ENCODE measurements at regions of chr1 and their contacts with region 1.

Region 1: DNA sequence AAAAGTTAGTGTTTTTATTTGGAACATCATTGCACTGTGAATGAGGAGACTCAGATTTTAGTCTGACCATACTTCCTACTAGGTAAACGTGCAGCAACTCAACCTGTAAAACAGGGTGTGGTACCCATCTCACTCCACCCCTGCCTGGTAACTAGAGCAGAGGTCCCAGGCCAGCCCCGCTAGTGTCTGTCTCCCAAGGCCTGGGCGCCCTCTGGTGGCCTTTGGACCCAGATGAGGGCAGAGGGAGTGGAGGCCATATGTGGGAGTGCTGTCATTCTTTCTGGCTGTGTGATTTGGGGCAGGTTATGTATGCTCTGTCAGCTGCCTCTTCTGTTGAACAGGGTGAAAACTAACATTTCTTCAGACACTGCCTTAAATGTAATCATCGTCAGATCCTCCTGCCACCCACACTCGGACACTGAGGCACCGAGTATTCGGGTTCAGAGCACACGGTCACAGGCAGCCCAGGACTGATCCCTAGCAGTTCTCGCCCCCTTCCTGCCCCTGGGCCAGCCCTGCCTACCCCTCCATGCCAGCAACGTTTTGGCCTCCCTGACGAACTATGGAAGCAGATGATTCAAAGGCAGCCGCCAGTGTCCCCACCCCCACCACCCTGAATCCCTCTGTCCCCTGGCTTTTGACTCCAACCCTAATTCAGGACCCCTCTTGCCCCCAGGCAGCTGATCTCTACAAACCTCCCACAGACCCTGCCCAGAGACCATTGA is 76.0 kb downstream of the CD247 start:
- DNase-seq: peak; percentile 93
- H3K4me3 Mint-ChIP-seq: no peak overlapping the region
- H3K27ac Mint-ChIP-seq: peak overlapping the region; percentile 79
- H3K4me1 Mint-ChIP-seq: peaks cover 74% of the 10 kb centered on the region
- H3K27me3 Mint-ChIP-seq: no peaks in the 10 kb centered on the region

Region 2: DNA sequence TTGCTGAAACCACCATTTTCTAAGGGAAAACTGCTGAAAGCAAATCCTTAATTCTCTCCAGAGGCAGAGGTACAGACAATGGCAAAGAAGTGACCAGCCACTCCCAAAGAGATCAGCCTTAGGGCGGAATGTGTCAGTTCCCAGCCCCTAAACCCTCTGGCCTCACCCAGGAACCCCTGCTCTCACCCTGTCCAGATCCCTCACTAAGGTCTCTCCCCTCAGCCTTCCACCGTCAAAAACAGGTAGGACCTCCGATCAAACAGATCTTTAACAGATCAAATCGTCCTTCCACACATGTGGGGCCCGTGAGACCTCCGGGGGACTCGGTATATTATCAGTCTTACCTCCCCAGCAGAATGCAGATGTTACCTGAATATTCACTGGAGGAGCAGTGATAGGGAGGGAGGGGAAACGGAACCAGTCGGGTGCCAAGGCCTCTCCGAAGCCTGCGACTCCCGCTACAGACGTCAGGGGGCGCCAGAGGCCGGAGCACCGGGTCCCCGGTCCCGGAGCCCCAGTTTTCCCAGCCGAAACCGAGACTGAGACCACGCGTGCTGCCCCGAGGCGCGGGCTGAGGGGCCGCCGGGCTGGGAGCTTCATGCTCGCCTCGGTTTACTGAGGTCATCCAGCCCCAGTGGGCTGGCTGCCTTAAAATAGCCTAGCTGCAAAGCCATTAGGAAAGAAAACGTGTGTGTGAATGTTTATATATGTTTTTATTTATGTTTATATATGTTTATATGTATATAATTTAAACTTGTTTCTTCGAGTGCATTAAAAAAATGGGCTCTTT is 375.8 kb before region 1 on chr1:
- CTCF ChIA-PET with region 1: interaction called, 3 read pairs
- intact Hi-C with region 1: loop called (anchors 1 kb)
- DNase-seq: peak; percentile 82
- H3K4me3 Mint-ChIP-seq: no peak overlapping the region
- H3K27ac Mint-ChIP-seq: no peak overlapping the region
- H3K4me1 Mint-ChIP-seq: peaks cover 2% of the 10 kb centered on the region
- H3K27me3 Mint-ChIP-seq: no peaks in the 10 kb centered on the region

Region 3: DNA sequence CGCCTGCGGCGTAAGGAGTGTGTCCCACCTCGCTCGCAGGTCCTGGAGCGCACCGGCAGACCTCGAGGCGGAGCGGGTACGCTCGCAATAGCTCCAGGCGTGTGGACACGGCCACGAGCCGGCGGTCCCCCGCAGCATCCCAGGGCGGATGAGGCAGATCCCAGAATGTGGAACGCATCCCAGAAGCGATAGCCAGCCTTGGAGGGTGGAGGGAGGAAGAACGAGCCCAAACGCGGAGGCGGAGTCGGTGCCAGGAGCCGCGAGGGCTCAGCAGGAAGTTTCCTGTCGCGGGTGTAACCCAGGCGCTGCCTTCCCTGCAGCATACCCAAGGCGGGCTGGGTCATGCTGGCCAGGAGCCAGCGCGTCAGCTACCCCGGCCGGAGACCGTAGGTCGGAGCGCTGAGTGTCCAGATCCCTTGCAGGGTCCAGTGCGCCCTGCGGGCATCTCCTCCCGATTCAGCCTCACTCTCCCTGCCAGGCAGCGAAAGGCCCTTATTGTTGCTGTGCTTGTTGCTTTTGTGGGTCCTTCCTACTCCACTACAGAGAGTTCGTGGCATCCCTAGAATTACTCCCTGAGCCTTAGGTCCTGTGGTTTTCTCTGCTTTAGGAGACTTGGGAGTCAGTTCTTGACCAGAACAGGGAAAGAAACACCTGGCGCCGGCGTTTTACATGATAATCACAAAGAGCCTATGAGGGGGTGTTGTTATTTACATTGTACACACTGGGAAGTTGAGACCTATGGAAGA is 320.7 kb before region 1 on chr1:
- CTCF ChIA-PET with region 1: interaction called, 3 read pairs
- intact Hi-C with region 1: loop called (anchors 1 kb)
- DNase-seq: peak; percentile 58
- H3K4me3 Mint-ChIP-seq: peak overlapping the region; percentile 81
- H3K27ac Mint-ChIP-seq: no peak overlapping the region
- H3K4me1 Mint-ChIP-seq: peaks cover 3% of the 10 kb centered on the region
- H3K27me3 Mint-ChIP-seq: peaks cover 2% of the 10 kb centered on the region

Region 4: DNA sequence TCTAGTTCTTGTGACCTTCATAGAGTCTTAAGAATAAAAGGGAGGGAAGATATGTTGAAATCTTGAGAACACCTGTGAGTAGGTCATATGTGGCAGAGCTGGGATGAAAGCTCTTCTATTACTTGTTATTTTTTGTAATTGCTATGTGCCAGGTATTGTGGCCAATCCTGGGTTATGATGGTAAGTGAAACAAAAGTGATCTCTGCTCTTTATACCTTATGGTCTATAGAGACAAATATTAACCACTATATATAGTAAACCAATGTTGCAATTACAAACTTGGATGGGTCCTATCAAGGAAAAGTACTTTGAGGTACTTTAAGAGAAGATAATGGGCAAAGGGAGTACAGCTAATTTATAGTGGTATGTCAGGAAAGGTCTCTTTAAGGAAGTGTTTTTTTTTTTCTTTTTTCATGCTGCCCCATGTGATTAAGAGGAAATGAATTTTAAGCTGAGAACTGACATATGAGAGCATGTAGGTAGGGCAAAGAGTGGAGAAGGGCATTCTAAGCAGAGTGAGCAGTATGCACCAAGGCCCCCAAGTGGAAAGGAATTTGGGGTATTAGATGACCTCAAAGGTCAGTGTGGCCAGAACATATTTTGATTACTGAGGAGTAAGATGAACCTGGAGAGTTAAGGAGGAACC is 178.3 kb before region 1 on chr1:
- CTCF ChIA-PET with region 1: interaction called, 26 read pairs
- intact Hi-C with region 1: loop called (anchors 1 kb)
- DNase-seq: no peak
- H3K4me3 Mint-ChIP-seq: no peak overlapping the region
- H3K27ac Mint-ChIP-seq: no peak overlapping the region
- H3K4me1 Mint-ChIP-seq: peaks cover 20% of the 10 kb centered on the region
- H3K27me3 Mint-ChIP-seq: no peaks in the 10 kb centered on the region

Region 5: GRCh38 chr1:167401260-167401873 is 40.9 kb before region 1 on chr1:
- CTCF ChIA-PET with region 1: interaction called, 8 read pairs
- intact Hi-C with region 1: loop called (anchors 1 kb)
- DNase-seq: peak; percentile 70
- H3K4me3 Mint-ChIP-seq: no peak overlapping the region
- H3K27ac Mint-ChIP-seq: no peak overlapping the region
- H3K4me1 Mint-ChIP-seq: no peaks in the 10 kb centered on the region
- H3K27me3 Mint-ChIP-seq: no peaks in the 10 kb centered on the region

Region 6: DNA sequence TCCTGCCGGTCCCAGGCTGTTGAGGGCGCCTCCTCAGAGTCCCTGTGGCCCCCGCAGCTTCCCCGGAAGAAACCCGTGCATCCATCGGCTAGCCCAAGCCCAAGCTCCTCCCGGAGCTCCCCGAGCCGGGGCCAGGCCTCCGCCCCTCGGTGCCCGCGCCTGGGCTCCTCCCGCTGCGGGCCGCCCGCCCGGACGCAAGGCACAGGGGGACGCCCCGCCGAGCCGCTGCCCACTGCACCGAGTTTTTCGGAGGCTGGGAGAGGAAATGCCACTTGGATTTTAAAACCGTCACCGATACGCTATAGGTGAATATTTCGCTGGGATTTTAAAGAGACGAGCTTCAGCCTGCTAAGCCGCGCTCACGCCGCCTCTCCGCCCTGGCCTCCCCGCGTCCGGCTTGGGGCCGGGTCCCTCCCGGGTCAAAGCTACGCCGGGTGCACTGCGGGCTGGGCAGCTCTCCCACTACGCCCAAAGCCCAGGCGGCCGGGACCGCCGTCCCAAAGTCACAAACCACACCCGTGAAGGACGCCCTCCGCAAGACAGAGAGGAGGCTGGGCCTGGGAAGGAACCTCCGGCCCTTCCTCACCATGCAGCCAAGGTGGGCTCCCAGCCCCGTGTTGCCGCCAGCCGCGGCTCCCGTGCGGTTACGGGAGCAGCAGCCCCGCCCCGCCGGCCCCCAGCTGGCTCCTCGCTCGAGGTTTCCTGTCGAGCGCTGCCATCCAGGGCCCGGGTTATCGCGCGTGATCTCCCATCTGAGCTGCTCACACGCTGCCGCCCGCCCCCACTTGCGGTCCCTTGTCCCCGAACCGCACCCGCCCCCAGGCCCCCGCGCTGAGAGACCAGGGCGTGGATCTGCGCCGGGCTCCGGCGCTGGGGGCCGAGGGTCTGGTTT is 12.9 kb after region 1 on chr1:
- CTCF ChIA-PET with region 1: interaction called, 20 read pairs
- intact Hi-C with region 1: loop called (anchors 1 kb)
- DNase-seq: peak; percentile 83
- H3K4me3 Mint-ChIP-seq: peak overlapping the region; percentile 79
- H3K27ac Mint-ChIP-seq: peak overlapping the region; percentile 87
- H3K4me1 Mint-ChIP-seq: peaks cover 67% of the 10 kb centered on the region
- H3K27me3 Mint-ChIP-seq: no peaks in the 10 kb centered on the region

Region 7: DNA sequence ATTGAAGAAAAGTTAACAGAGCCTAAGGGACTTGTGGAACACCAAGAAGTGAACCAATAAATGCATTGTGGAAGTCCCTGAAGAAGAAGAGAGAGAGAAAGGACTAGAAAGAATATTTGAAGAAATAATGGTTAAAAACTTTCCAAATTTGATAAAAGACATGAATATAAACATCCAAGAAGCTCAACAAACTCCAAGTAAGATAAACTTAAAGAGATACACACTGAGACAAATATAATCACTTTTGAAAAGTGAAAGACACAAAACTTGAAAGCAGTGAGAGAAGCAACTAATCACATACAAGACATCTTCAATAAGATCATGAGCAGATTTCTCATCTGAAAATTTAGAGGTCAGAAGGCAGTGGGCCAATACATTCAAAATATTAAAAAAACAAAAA is 370.7 kb after region 1 on chr1:
- CTCF ChIA-PET with region 1: no interaction called
- intact Hi-C with region 1: no loop called
- DNase-seq: no peak
- H3K4me3 Mint-ChIP-seq: no peak overlapping the region
- H3K27ac Mint-ChIP-seq: no peak overlapping the region
- H3K4me1 Mint-ChIP-seq: no peaks in the 10 kb centered on the region
- H3K27me3 Mint-ChIP-seq: no peaks in the 10 kb centered on the region

Measured in activated naive CD4-positive, alpha-beta T cell treated with anti-CD3 and anti-CD28 coated beads for 36 hours (primary cell).